ENCODE measurements at regions of chr11 and their contacts with region 1.

Region 1: GRCh38 chr11:113773416-113774173 is at the start of gene ZW10:
- DNase-seq: peak; percentile 96
- ATAC-seq: peak; percentile 99
- H3K4me3 Mint-ChIP-seq: peak within 1 kb of the TSS; percentile 98
- H3K27ac Mint-ChIP-seq: peak within 1 kb of the TSS; percentile 96
- H3K4me1 Mint-ChIP-seq: peaks cover 18% of the 10 kb centered on the region
- H3K27me3 Mint-ChIP-seq: no peaks in the 10 kb centered on the region
- total RNA-seq, gene ZW10: 16.9 to 18.5 TPM

Region 2: DNA sequence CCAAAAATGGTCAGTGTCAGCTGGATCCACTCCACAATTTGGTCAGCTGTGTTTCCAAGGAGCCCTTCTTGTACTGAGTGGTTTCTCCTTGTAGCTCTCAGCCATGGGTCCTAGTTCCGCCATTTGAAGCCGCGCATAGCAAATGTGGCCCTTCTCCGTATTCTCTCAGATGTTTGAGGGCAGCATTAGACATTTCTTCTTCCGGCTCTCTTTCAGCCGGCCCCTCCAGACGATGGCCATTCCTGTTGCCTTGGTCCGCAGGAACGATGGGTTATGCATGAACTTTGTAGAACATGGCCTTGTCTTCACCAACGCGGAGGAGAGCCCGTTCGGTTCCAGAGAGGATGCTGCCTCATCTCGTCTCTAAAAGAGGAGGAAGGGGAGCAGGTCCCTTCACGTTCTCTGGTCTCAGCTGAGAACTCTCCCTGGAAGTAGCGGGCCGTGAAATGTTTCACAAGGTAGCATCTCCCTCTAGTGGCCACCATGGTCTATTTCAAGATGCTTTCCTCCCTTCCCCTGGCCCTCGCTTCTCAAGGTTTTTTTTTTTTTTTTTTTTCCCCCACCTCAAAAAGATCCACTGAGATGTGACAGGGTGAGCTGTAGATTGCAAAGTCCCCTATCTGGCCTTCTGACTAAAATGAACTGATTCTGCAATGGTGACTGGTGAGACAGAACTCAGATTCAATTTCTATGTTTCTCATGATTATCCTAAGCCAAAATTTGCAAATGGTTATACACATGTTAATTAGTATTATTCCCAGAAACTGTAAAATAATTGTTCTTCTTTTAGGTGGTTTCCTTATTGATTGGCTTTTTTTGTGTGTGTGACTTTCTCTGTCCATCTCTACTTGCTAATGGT is 1493.1 kb before region 1 on chr11:
- CTCF ChIA-PET with region 1: no interaction called
- POLR2A ChIA-PET with region 1: no interaction called
- intact Hi-C with region 1: loop called in 1 of 2 experiments (anchors 10 kb)
- DNase-seq: peak; percentile 77
- ATAC-seq: peak; percentile 92
- H3K4me3 Mint-ChIP-seq: peak overlapping the region; percentile 82
- H3K27ac Mint-ChIP-seq: peak overlapping the region; percentile 76
- H3K4me1 Mint-ChIP-seq: peaks cover 14% of the 10 kb centered on the region
- H3K27me3 Mint-ChIP-seq: no peaks in the 10 kb centered on the region

Region 3: DNA sequence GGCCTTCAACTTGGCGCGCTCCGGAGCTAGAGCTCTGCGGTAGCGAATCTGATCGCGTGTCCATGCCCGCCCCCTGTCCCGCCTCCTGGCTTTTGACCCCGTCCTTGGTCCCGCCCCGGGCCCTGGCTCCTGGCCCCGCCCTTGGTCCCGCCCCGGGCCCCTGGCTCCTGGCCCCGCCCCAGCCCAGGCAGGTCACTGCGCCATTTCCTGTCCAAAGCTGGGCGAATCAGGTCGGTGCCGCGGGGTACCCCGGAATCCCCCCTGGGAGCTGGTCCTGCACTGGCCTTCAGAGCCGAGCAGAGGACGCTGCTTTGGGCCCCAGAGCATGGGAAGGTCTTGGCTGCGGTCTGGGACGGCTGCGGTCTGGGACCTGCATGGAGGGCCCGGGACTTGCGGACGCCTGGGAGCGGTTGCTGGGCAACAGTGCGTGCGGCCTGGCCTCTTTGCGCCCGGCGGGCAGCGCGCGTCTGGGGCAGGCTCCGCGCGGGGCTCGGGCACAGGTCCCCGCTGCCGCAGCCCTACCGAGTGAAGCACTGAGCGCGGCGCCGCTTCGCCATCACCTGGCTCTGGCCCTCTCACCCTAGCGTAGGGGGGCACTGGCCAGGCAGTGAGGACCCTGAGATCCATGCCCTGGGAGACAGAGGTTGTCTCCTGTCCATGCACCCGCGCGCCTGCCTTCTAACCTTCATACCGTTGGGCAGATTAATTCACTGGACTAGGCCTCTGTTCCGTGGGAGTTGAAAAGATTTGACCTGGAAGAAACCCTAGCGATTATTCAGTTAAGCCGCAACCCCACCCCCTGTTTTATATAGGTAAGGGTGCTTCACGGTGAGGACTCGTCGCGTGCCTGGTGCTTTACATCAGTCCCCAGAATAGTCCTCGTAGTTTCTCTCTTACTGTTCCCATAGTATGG is 458.9 kb before region 1 on chr11 and contains the start of gene TTC12:
- CTCF ChIA-PET with region 1: interaction called, 3 read pairs
- POLR2A ChIA-PET with region 1: no interaction called
- intact Hi-C with region 1: loop called (anchors 1 to 2 kb)
- DNase-seq: peak; percentile 97
- ATAC-seq: peak; percentile 99
- H3K4me3 Mint-ChIP-seq: peak within 1 kb of the TSS; percentile 77
- H3K27ac Mint-ChIP-seq: peak within 1 kb of the TSS; percentile 82
- H3K4me1 Mint-ChIP-seq: peaks cover 24% of the 10 kb centered on the region
- H3K27me3 Mint-ChIP-seq: no peaks in the 10 kb centered on the region
- total RNA-seq, gene TTC12: 16.3 to 17.6 TPM

Region 4: GRCh38 chr11:113875234-113876073 is 101.9 kb after region 1 on chr11 and contains the start of gene USP28:
- CTCF ChIA-PET with region 1: no interaction called
- POLR2A ChIA-PET with region 1: no interaction called
- intact Hi-C with region 1: loop called (anchors 1 to 2 kb)
- DNase-seq: peak; percentile 89
- ATAC-seq: peak; percentile 80
- H3K4me3 Mint-ChIP-seq: peak within 1 kb of the TSS; percentile 90
- H3K27ac Mint-ChIP-seq: peak within 1 kb of the TSS; percentile 92
- H3K4me1 Mint-ChIP-seq: peaks cover 45% of the 10 kb centered on the region
- H3K27me3 Mint-ChIP-seq: no peaks in the 10 kb centered on the region
- total RNA-seq, gene USP28: 38.6 to 43.9 TPM

Region 5: DNA sequence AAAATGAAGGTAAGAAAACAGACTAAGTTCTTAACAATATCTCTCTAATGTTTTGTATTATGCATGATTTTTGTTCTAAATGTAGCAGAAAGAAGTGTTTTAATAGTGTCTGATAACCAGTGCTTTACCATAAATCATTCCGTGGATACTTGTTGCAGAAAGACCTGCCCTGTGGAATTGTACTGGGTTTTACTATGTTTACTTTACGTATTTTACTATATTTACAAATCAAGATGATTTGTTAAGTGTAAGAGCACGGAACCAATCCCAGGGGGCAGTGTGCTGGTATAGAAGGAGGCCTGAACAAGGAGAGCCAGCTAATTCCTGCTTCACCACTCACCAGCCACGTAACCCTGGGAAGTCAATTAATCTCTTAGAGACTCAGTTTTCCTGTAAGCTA is 132.4 kb after region 1 on chr11:
- CTCF ChIA-PET with region 1: no interaction called
- POLR2A ChIA-PET with region 1: no interaction called
- intact Hi-C with region 1: no loop called
- DNase-seq: no peak
- ATAC-seq: no peak
- H3K4me3 Mint-ChIP-seq: no peak overlapping the region
- H3K27ac Mint-ChIP-seq: no peak overlapping the region
- H3K4me1 Mint-ChIP-seq: no peaks in the 10 kb centered on the region
- H3K27me3 Mint-ChIP-seq: peaks cover 3% of the 10 kb centered on the region

Region 6: GRCh38 chr11:114159802-114160632 is 386.4 kb after region 1 on chr11:
- CTCF ChIA-PET with region 1: no interaction called
- POLR2A ChIA-PET with region 1: no interaction called
- intact Hi-C with region 1: no loop called
- DNase-seq: peak; percentile 93
- ATAC-seq: peak; percentile 83
- H3K4me3 Mint-ChIP-seq: peak overlapping the region; percentile 49
- H3K27ac Mint-ChIP-seq: peak overlapping the region; percentile 76
- H3K4me1 Mint-ChIP-seq: peaks cover 70% of the 10 kb centered on the region
- H3K27me3 Mint-ChIP-seq: no peaks in the 10 kb centered on the region

Region 7: DNA sequence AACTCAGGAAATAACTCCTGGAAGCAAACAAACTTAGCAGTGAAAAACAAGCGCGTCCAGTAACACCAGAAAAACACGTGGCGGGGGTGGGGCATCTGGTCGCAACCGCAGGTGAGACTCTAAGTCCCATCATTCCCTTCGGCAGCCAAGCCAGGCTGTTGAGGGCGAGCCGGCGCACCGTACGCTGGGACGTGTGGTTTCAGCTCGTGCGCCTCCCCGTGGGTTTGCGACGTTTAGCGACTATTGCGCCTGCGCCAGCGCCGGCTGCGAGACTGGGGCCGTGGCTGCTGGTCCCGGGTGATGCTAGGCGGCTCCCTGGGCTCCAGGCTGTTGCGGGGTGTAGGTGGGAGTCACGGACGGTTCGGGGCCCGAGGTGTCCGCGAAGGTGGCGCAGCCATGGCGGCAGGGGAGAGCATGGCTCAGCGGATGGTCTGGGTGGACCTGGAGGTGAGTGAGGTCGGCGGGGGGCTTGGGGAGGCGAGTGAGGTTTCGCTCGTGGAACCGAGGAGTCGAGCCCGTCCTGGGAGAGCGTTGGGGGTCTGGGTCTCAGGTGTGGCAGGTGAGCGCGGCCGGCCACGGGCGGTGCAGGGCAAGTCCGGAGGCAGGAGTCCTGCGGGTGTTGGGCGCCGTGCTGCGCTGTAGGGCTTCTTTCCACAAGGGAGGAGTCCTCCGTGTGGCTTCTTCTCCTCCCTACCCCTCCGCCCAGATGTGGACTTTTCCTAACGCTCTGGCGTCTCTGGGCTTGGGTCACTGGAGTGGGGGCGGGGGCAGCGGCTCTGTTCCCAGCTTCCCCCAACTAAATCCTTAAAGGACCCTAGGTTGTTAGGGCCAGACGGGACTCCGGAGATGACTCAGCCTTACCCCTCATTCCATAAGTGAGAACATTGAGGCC is 665.9 kb after region 1 on chr11 and contains the start of gene REXO2:
- CTCF ChIA-PET with region 1: no interaction called
- POLR2A ChIA-PET with region 1: no interaction called
- intact Hi-C with region 1: loop called in 1 of 2 experiments (anchors 1 kb)
- DNase-seq: peak; percentile 96
- ATAC-seq: peak; percentile 97
- H3K4me3 Mint-ChIP-seq: peak within 1 kb of the TSS; percentile 93
- H3K27ac Mint-ChIP-seq: peak within 1 kb of the TSS; percentile 93
- H3K4me1 Mint-ChIP-seq: peaks cover 27% of the 10 kb centered on the region
- H3K27me3 Mint-ChIP-seq: no peaks in the 10 kb centered on the region
- total RNA-seq, gene REXO2: 66.6 to 70.0 TPM

Measured in activated CD4-positive, alpha-beta T cell treated with anti-CD3 and anti-CD28 coated beads for 36 hours (primary cell).